ENCODE measurements at regions of chr10 and their contacts with region 1.

Region 1: DNA sequence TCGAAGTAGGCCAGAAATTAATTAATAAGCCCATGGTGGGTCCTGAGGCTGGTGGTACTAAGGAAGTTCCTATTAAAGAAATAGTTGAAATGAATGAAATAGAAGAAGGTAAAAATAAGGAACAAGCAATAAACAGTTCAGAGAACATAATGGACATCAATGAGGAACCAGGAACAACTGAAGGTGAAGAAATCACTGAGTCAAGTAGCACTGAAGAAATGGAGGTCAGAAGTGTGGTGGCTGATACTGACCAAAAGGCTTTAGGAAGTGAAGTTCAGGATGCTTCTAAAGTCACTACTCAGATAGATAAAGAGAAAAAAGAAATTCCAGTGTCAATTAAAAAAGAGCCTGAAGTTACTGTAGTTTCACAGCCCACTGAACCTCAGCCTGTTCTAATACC is 36.0 kb downstream of the SLK start:
- DNase-seq: no peak

Region 2: DNA sequence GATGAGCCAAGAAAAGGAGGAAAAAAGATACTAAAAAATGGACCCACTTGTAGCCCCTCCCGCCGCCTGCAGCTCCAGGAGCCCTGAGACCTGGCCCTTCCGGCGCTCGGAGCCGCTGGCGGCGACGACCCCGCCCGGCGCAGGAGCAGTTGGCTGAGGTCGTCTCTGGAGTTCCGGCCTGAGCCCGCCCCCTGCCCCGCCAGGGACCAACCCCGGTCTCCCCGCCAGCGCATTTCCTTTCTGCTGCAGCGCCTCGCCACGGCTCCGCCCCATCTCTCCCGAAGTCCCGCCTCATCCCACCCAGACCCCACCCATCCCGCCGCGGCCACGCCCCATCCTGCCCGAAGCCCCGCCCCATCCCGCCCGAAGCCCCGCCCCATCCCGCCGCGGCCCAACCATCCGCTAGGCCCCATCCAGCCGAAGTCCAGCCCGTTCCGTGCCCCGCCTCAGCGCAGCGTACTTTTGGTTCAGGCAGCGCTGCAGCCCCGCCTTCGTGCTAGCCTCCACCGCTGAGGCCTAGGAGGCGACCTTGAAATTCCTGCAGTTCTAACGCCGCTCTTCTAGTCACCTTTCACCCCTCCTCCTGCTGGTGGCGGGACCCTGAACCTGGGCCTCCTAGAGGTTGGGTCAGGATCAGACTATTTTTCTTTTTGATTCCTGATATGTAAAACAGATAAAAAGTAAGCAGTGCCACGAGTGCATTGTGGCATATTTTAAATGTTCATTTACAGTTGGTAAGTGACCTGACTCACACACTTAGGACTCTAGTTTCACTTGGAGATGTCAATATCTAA is 84.7 kb before region 1 on chr10 and contains the start of gene STN1:
- in situ Hi-C with region 1: loop called (anchors 10 kb)
- DNase-seq: peak; percentile 92
- total RNA-seq, gene STN1: 20.4 and 23.6 TPM in 2 replicates

Measured in SK-MEL-5 (cell line).